ENCODE measurements at regions of chr3 and their contacts with region 1.

Region 1: GRCh38 chr3:48556793-48557626 is at the start of gene PFKFB4:
- DNase-seq: peak; percentile 99
- H3K4me3 ChIP-seq: peak within 1 kb of the TSS; percentile 37 to 79 (median 64)
- H3K27ac ChIP-seq: peak within 1 kb of the TSS; percentile 47
- H3K4me1 ChIP-seq: peaks cover 47% of the 10 kb centered on the region
- H3K27me3 ChIP-seq: no peaks in the 10 kb centered on the region
- CTCF ChIP-seq: no peak
- total RNA-seq, gene PFKFB4: 14.7 to 45.3 TPM

Region 2: GRCh38 chr3:48273594-48274211 is 283.3 kb before region 1 on chr3:
- CTCF ChIA-PET with region 1: no interaction called
- dilution Hi-C with region 1: loop called (anchors 10 kb)
- in situ Hi-C with region 1: loop called in 1 of 2 experiments (anchors 25 kb)
- intact Hi-C with region 1: no loop called
- DNase-seq: peak; percentile 34
- H3K4me3 ChIP-seq: no peak overlapping the region
- H3K27ac ChIP-seq: no peak overlapping the region
- H3K4me1 ChIP-seq: peaks cover 15% of the 10 kb centered on the region
- H3K27me3 ChIP-seq: no peaks in the 10 kb centered on the region
- CTCF ChIP-seq: peak; percentile 84 to 86

Region 3: GRCh38 chr3:48595526-48596121 is 38.6 kb after region 1 on chr3:
- CTCF ChIA-PET with region 1: no interaction called
- dilution Hi-C with region 1: loop called (anchors 5 kb)
- in situ Hi-C with region 1: no loop called
- intact Hi-C with region 1: loop called (anchors 2 kb)
- DNase-seq: peak; percentile 98
- H3K4me3 ChIP-seq: peak overlapping the region in 2 of 3 experiments; percentile 60 to 79
- H3K27ac ChIP-seq: peak overlapping the region; percentile 97
- H3K4me1 ChIP-seq: peaks cover 82% of the 10 kb centered on the region
- H3K27me3 ChIP-seq: no peaks in the 10 kb centered on the region
- CTCF ChIP-seq: no peak

Region 4: DNA sequence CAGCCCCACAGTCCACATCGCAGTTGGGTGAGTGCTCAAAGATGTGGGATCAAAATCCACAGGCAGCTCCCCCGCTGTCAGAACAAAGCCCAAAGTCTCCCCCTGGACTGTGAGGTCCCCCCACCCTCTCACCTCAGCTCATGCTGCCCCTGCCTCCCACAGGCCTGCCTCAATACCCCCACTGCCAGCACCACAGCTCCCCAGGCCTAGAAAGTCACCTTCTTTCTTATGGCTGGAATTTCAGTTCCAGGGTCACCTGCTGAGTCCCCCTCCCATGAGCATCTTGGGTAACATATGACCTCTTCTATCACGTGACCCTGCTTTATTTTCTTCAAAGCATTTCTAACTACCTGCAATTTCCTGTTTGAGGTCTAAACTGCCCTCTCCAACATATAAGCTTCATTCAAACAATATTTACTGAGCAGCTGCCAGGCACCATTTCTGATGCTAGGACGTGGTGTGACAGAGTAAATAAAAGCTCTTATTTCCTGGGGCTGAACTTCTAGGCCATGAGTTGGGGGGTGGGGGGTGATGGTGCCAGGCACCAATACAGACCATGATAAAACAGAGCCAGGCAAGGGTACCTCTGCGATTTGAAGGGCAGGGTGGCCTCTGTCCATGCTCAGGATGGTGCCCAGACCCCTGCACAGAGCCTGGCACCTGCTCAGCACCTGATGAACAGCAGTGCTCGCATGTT is 67.0 kb after region 1 on chr3:
- CTCF ChIA-PET with region 1: interaction called, 14 read pairs
- dilution Hi-C with region 1: no loop called
- in situ Hi-C with region 1: no loop called
- intact Hi-C with region 1: no loop called
- DNase-seq: no peak
- H3K4me3 ChIP-seq: no peak overlapping the region
- H3K27ac ChIP-seq: no peak overlapping the region
- H3K4me1 ChIP-seq: no peaks in the 10 kb centered on the region
- H3K27me3 ChIP-seq: no peaks in the 10 kb centered on the region
- CTCF ChIP-seq: no peak

Region 5: GRCh38 chr3:48650723-48651122 is 93.7 kb after region 1 on chr3:
- CTCF ChIA-PET with region 1: no interaction called
- dilution Hi-C with region 1: loop called (anchors 5 kb)
- in situ Hi-C with region 1: no loop called
- intact Hi-C with region 1: no loop called
- DNase-seq: no peak
- H3K4me3 ChIP-seq: no peak overlapping the region
- H3K27ac ChIP-seq: no peak overlapping the region
- H3K4me1 ChIP-seq: no peaks in the 10 kb centered on the region
- H3K27me3 ChIP-seq: no peaks in the 10 kb centered on the region
- CTCF ChIP-seq: no peak

Region 6: GRCh38 chr3:48656061-48656840 is 99.2 kb after region 1 on chr3:
- CTCF ChIA-PET with region 1: no interaction called
- dilution Hi-C with region 1: loop called (anchors 5 kb)
- in situ Hi-C with region 1: no loop called
- intact Hi-C with region 1: loop called (anchors 2 kb)
- DNase-seq: peak; percentile 74
- H3K4me3 ChIP-seq: peak overlapping the region in 2 of 3 experiments; percentile 43
- H3K27ac ChIP-seq: no peak overlapping the region
- H3K4me1 ChIP-seq: peaks cover 8% of the 10 kb centered on the region
- H3K27me3 ChIP-seq: no peaks in the 10 kb centered on the region
- CTCF ChIP-seq: peak; percentile 52 to 64

Measured in mammary epithelial cell (primary cell).